ENCODE measurements at regions of chr2 and their contacts with region 1.

Region 1: DNA sequence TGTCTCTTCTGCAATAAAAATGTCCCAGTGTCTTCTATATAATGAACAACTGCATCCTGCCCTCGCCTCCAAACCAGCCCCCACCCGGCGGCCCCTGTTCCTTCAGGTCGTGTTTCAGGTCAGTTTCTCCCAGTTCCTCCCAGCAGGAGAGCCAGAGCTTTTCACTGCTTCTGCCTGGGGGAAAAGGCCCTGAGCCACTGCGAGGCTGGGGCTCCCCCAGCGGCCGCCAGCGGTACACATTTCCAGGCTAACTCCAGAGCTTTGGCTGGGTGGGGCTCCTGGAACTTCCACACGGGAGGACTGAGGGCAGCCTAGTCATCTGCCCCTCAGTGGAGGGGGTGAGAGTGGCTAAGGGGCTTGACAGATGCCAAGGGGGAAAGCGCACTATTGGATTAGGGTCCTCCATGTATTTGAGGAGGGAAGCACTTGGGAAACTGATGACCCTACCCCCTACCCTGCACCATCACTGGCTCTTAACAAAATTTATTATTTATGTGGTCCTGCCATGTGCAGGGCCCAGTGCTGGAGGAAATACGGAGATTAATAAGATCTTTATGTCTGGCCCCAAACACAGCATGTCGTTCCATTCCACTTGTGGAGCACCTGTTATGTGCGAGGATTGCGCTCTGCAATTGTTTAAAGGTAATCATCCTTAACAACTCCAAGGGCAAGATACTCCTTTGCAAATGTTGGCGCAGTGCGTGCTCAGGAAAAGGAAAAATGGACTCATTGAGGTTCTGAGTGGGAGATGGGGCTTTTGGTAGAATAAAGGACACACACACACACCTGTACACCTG is 17.3 kb upstream of the CYS1 start:
- DNase-seq: no peak
- H3K4me3 ChIP-seq: no peak overlapping the region
- H3K27ac ChIP-seq: no peak overlapping the region
- H3K27me3 ChIP-seq: peaks cover 2% of the 10 kb centered on the region
- CTCF ChIP-seq: peak; percentile 95

Region 2: DNA sequence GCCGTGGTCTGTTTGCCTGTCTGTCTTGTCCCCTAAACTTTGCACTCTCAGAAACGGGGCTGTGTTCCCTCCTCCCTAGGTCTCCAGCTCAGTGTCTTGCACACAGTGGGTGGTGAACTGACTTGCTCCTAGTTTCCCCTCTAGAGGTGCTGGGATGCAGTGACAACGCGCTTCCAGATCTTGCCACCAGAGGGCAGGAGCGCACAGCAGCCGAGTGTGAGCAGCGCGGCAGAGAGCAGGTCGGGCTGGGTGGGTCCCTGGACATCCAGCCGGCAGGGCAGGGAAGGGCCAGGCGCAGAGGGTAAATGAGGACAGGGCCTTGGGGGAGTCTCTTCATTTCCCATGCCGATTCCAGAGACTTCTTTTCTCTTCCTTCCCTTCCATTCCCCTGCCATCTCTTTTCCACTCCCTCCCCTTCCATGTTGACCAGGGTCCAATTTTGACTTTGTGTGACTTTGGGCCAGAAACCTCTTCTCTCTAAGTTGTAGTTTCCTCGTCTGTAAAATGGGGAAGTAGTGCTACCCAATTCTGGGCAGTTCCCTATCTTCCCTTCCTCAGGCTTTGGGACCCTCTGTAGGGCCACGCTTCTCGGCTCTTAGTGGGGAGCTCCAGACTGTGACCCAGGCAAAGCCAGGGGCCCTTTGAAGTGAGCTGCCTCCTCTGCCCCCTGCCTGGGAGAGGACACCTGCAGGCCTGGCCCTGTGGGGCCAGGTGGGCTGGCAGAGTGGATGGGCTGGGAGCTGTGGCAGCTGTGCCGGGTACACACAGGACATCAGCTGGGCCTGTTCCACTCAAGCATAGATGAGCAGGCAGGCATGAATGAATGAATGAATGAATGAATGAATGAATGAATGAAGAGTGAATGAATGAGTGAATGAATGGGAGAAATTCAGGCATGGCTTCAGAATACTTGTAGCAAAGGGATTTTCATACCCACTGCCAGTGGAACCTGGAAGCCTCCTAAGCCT is 297.6 kb before region 1 on chr2:
- CTCF ChIA-PET with region 1: interaction called, 27 read pairs
- POLR2A ChIA-PET with region 1: no interaction called
- DNase-seq: peak; percentile 44
- H3K4me3 ChIP-seq: no peak overlapping the region
- H3K27ac ChIP-seq: no peak overlapping the region
- H3K27me3 ChIP-seq: no peaks in the 10 kb centered on the region
- CTCF ChIP-seq: peak; percentile 99

Region 3: GRCh38 chr2:10079234-10079869 is 18.2 kb before region 1 on chr2:
- CTCF ChIA-PET with region 1: interaction called, 99 read pairs
- POLR2A ChIA-PET with region 1: interaction called, 4 read pairs
- DNase-seq: no peak
- H3K4me3 ChIP-seq: peak overlapping the region; percentile 39
- H3K27ac ChIP-seq: no peak overlapping the region
- H3K27me3 ChIP-seq: peaks cover 66% of the 10 kb centered on the region
- CTCF ChIP-seq: no peak